PC-3 (cell line): ENCODE measurements at regions of chr3 and their contacts with region 1.

Region 1: DNA sequence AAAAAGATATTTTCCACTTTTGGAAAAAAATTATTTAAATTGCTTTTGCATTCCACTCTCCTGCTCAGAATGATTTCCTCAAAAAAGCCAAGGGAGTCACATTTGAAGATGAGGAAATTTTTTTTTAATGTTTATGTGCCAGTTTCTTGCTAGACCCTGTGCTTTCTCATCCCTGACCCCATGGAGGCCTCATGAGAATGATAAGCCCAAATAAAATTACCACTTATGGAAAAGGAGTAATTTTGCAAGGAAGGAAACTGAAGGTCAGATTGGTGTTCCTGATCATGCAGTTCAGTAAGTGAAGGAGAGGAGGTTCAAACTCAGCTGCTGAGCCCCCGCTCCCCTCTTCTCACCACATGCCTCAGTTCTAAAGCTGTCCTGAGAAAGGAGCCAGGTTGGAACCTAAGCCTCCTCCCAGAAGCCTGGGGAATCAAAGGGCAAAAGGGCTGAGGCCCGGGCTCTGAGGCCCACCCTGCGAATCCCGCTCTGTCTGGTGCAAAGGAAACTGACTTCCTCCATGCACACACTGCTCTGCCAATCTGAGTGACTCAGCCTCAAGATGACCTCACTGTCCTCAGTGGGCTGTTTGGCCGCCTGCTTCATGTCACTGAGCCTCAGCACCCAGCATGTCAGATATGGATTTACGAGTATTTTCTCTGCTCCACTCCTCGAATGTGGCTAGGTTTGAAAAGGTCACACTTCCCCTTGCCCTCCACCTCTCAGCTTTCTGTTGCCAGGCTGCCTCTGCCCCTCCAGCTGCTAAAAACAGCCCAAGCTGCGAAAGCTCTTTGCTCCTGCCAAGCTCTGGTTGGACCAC is 56.9 kb upstream of the FLNB start:
- DNase-seq: peak; percentile 76
- ATAC-seq: peak; percentile 74
- H3K4me3 ChIP-seq: no peak overlapping the region
- H3K27ac ChIP-seq: peak overlapping the region; percentile 53
- H3K4me1 ChIP-seq: peaks cover 29% of the 10 kb centered on the region
- H3K27me3 ChIP-seq: no peaks in the 10 kb centered on the region
- CTCF ChIP-seq: no peak

Region 2: GRCh38 chr3:58177747-58178527 is 226.7 kb after region 1 on chr3:
- CTCF ChIA-PET with region 1: no interaction called
- POLR2A ChIA-PET with region 1: no interaction called
- intact Hi-C with region 1: loop called (anchors 5 kb)
- DNase-seq: peak; percentile 89
- ATAC-seq: peak; percentile 52
- H3K4me3 ChIP-seq: peak overlapping the region; percentile 53; the same call in 1 of the 2 replicates
- H3K27ac ChIP-seq: no peak overlapping the region
- H3K4me1 ChIP-seq: peaks cover 37% of the 10 kb centered on the region
- H3K27me3 ChIP-seq: no peaks in the 10 kb centered on the region
- CTCF ChIP-seq: peak; percentile 91